ENCODE measurements at regions of chr9 and their contacts with region 1.

Region 1: DNA sequence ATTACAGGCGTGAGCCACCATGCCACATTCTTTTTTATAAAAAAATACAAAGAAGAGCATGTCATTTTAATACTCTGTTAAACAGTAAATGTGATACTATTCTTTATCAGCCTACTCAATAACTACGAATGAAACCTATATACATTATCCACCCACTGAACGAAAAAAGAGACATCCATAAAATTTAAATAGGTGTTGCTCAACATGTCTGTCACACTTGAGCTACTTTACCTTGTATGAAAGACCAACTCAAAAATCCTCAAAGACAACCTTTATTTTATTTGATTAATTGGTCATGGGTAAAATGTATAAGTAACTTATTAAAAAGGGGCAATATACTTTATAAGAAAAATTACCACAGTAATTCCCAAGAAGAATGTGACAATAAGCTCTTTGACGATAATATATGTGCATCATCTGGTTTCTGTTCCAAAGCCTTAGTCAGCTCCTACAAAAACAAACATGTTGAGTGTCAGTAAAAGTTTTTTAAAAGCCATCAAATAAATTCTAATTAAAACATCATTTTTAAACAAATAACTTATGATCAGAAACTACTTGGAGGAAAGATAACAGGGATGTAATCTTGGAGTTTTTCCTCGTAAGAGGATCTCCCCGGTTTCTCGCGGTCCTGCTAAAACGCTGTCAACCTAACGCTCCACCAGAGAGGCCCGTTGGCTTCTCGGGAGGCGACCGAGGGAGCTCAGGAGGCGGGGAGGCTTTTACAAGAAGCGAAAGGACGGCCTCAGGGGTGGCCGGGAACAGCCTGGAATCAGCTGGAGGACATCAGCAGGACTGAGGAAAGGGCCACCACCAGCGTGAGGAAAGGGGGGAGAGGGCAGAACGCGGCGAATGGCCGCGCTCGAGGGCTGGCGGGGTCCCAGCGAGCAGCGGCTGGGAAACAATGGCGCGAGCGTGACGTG is 13.5 kb upstream of the ANKRD18B start:
- H3K4me3 ChIP-seq: peak overlapping the region; percentile 76
- H3K27ac ChIP-seq: peak overlapping the region; percentile 91
- H3K4me1 ChIP-seq: no peaks in the 10 kb centered on the region
- CTCF ChIP-seq: no peak

Region 2: DNA sequence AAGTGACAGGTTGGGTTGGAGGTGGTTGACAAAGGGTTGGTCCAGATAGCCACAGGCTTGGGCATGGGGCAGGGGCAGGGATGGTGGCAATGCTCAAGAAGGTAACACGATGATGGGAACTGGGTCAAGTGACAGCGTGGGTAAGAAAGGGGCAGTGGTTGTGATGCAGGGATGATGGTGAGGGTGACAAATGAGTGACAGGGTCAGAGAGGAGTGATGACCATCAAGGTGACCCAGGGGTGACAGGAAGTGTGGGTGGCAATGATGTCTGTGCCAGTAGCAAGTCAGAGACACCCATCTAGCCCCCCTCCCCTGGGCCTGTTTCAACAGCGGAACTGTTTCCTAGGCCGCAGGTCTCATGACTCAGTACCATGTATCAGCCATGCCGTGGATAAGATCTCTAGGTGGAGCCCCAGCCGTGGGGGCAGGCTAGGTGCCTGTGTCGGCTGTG is 83.7 kb before region 1 on chr9:
- CTCF ChIA-PET with region 1: no interaction called
- POLR2A ChIA-PET with region 1: no interaction called
- H3K4me3 ChIP-seq: no peak overlapping the region
- H3K27ac ChIP-seq: no peak overlapping the region
- H3K4me1 ChIP-seq: no peaks in the 10 kb centered on the region
- CTCF ChIP-seq: no peak

Region 3: GRCh38 chr9:33458444-33458843 is 52.1 kb before region 1 on chr9:
- CTCF ChIA-PET with region 1: no interaction called
- POLR2A ChIA-PET with region 1: no interaction called
- H3K4me3 ChIP-seq: no peak overlapping the region
- H3K27ac ChIP-seq: no peak overlapping the region
- H3K4me1 ChIP-seq: no peaks in the 10 kb centered on the region
- CTCF ChIP-seq: no peak

Region 4: GRCh38 chr9:33480087-33480486 is 30.4 kb before region 1 on chr9:
- CTCF ChIA-PET with region 1: no interaction called
- POLR2A ChIA-PET with region 1: no interaction called
- H3K4me3 ChIP-seq: no peak overlapping the region
- H3K27ac ChIP-seq: no peak overlapping the region
- H3K4me1 ChIP-seq: no peaks in the 10 kb centered on the region
- CTCF ChIP-seq: no peak

Region 5: DNA sequence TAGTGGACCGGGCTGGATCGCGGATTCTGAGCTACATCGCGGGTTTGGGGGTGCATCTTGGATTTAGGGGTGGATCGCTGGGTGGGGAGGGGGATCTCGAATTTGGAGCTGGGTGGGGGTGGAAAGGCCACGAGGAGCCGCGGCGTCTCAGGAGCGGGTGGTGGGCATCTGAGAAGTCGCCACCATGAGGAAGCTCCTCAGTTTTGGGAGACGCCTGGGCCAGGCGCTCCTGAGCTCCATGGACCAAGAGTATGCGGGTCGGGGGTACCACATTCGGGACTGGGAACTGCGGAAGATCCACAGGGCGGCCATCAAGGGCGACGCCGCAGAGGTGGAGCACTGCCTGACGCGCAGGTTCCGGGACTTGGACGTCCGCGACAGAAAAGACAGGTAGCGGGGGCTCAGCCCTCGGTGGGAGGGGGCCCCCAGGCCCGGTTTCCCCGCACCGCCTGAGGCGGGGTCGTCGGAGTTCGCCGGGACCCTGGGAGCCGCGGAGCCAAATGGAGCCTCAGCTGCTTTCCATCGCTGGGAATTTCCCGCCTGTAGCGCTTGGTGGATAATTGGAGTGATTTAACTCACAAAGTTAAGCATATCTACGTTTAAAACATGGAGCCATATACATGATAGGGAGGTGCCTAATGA is 13.9 kb after region 1 on chr9:
- CTCF ChIA-PET with region 1: interaction called, 7 read pairs
- POLR2A ChIA-PET with region 1: interaction called, 19 read pairs
- H3K4me3 ChIP-seq: peak overlapping the region; percentile 72
- H3K27ac ChIP-seq: peak overlapping the region; percentile 85
- H3K4me1 ChIP-seq: 0 out of 2 replicates have a peak, but pooled peaks cover 2% of the 10 kb centered on the region
- CTCF ChIP-seq: no peak

Region 6: DNA sequence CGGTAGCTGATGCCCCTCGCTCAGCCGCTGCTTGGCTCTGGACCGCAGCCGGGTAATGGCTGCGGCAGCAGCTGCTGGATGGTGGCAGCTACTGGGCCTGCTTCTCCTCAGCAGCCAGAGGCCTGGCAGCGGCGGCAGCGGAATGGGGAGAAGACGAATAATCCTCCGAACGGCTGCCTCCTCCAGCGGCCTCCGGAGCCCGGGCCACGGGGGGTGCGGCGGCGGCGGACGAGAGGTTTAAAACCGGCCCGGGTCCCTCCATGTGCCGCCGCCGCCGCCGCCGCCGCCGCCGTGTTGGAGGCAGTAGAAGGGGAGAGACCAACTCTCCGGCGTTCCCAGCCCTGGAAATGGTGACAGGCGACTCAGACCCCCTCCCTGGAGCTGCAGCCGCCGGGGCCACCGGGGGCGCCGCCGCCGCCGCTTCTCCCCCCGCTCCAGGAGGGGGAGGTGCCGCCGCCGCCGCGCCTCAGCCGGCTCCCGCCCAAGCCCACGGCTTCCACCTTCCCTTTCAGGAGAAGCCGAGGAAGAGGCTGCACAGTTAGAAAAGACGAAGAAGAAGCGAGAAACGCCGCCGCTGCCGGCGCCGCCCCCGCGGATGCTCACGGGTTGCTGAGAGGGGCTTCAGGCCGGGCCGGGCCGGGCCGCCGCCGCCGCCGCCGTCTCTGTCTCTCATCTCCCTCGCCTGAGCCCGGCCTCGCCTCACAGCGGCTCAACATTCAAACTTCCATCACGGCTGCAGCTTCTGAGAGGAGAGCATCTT is 166.4 kb after region 1 on chr9:
- CTCF ChIA-PET with region 1: no interaction called
- POLR2A ChIA-PET with region 1: no interaction called
- H3K4me3 ChIP-seq: peak overlapping the region; percentile 65
- H3K27ac ChIP-seq: peak overlapping the region; percentile 97
- H3K4me1 ChIP-seq: peaks cover 2% of the 10 kb centered on the region; the same call in 1 of the 2 replicates
- CTCF ChIP-seq: no peak

Measured in HEK293 (cell line).